Mammary epithelial cell (primary cell): ENCODE measurements at regions of chr3 and their contacts with region 1.

Region 1: DNA sequence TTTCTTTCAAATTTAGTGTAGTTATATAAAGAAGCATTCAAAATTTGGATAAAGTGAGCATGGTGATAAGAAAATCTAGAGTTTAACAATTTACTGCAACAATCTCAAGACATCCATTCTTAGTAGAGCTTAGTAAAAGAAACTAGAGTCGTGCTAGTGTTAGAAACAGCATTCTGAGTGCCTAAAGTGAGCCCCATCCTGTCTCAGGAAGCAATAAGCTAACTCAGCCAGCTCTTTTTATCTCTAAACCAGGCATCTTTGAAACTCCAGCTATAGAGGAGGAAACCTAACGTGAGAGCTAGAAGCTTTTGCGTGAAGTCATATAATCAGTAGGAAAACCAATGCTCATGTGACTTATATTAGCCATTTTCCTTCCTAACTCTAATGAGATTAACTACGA is 1187.1 kb upstream of the EPHA6 start:
- DNase-seq: no peak
- H3K4me3 ChIP-seq: no peak overlapping the region
- H3K27ac ChIP-seq: no peak overlapping the region
- H3K4me1 ChIP-seq: no peaks in the 10 kb centered on the region
- H3K27me3 ChIP-seq: no peaks in the 10 kb centered on the region
- CTCF ChIP-seq: no peak

Region 2: GRCh38 chr3:95197616-95198015 is 429.7 kb before region 1 on chr3:
- CTCF ChIA-PET with region 1: no interaction called
- dilution Hi-C with region 1: no loop called
- in situ Hi-C with region 1: no loop called
- intact Hi-C with region 1: loop called (anchors 10 kb)
- DNase-seq: no peak
- H3K4me3 ChIP-seq: no peak overlapping the region
- H3K27ac ChIP-seq: no peak overlapping the region
- H3K4me1 ChIP-seq: no peaks in the 10 kb centered on the region
- H3K27me3 ChIP-seq: no peaks in the 10 kb centered on the region
- CTCF ChIP-seq: no peak